SK-N-SH (cell line): ENCODE measurements at regions of chr14 and their contacts with region 1.

Region 1: GRCh38 chr14:76918751-76919543 is 92.7 kb downstream of the LRRC74A start:
- DNase-seq: peak; percentile 74
- H3K4me3 ChIP-seq: peak overlapping the region; percentile 15 to 47; a peak in 3 of 4 replicates
- H3K27ac ChIP-seq: peak overlapping the region; percentile 100
- H3K4me1 ChIP-seq: peaks cover 67 to 73% of the 10 kb centered on the region in 2 experiments
- H3K27me3 ChIP-seq: no peaks in the 10 kb centered on the region
- CTCF ChIP-seq: peak; percentile 22
- EP300 ChIP-seq: peak; percentile 62 to 90; a peak in 3 of 4 replicates
- RAD21 ChIP-seq: peak; percentile 41

Region 2: GRCh38 chr14:76687611-76688382 is 231.2 kb before region 1 on chr14:
- CTCF ChIA-PET with region 1: no interaction called
- POLR2A ChIA-PET with region 1: no interaction called
- DNase-seq: no peak
- H3K4me3 ChIP-seq: no peak overlapping the region
- H3K27ac ChIP-seq: no peak overlapping the region
- H3K4me1 ChIP-seq: no peaks in the 10 kb centered on the region
- H3K27me3 ChIP-seq: no peaks in the 10 kb centered on the region
- CTCF ChIP-seq: no peak
- EP300 ChIP-seq: no peak
- RAD21 ChIP-seq: no peak

Region 3: DNA sequence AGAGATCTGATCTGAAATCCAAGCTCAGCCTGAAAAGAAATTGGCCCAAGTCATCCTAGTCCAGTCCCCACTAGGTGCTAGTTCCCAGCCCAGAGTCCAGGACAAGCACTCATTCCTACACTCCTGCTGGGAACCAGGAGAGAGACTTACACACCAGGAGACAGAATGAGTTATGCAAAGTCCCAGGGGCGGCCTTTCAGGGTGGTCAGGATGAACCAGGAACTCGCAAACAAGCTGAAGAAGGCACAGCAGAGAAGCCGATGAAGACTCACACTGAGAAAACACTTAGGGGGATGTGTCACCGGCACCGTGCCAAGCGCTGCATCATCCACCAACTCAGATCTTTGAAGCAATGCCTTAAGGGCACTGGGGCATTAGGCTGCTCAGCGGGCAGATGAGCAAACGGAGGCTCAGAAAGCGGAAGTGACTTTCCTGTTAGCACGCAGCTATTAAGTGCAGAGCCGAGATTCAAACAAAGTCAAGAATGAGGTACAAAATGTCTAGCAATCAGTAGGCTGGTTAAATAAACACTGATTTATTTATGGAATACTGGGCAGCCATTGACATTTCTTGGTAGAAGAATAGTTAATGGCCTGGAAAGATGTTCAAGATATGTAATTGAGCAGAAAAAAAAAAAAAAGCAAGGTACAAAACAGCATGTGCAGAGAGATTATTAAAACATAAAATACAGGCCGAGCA is 14.1 kb before region 1 on chr14:
- CTCF ChIA-PET with region 1: interaction called, 23 read pairs
- POLR2A ChIA-PET with region 1: no interaction called
- DNase-seq: peak; percentile 78
- H3K4me3 ChIP-seq: peak overlapping the region in 1 of 2 experiments; percentile 34; a peak in 2 of 4 replicates
- H3K27ac ChIP-seq: peak overlapping the region; percentile 55 to 85
- H3K4me1 ChIP-seq: peaks cover 19 to 24% of the 10 kb centered on the region in 2 experiments; a peak in 2 of 4 replicates
- H3K27me3 ChIP-seq: no peaks in the 10 kb centered on the region
- CTCF ChIP-seq: no peak
- EP300 ChIP-seq: peak; percentile 31 to 46; a peak in 2 of 4 replicates
- RAD21 ChIP-seq: no peak

Region 4: DNA sequence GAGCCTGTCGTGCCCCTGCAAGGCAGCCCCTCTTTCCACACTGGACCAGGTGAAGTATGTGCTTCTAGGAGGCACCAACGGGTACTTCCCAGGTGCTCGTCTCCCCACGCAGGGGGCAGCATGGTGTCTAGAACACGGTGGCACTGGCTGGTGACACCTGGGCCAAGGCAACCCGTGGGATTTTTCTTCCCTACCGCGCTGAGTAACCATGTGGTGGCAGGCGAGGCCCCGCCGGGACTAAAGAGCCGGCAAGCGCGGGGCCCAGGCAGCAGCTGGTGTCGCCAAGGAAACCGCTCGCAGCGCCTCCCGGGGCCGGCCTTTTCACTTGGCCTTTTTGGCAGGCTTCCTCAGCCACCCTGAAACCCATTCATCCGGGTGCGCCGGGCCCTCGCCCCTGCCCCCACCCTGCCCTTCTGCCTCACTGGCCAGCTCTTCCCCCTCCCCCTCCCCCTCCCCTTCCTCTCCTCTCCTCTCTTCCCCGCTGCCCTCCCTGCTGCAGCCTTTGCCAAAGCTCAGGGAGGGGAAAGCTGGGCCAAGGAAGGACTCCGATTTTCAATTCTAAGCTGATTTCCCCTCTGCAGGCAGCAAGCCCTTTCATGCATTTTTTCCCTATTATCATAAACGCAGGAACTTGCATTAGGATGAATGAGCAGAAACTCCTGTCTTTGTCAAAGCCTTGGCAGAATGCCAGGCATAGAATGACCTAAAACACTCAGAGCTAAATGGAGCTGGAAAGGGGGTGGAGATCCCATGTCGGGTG is 28.3 kb after region 1 on chr14:
- CTCF ChIA-PET with region 1: interaction called, 133 read pairs
- POLR2A ChIA-PET with region 1: interaction called, 9 read pairs
- DNase-seq: peak; percentile 90
- H3K4me3 ChIP-seq: peak overlapping the region; percentile 18 to 50
- H3K27ac ChIP-seq: peak overlapping the region; percentile 99
- H3K4me1 ChIP-seq: peaks cover 43 to 46% of the 10 kb centered on the region in 2 experiments
- H3K27me3 ChIP-seq: no peaks in the 10 kb centered on the region
- CTCF ChIP-seq: peak; percentile 52
- EP300 ChIP-seq: peak; percentile 47 to 49; a peak in 2 of 4 replicates
- RAD21 ChIP-seq: peak; percentile 73

Region 5: DNA sequence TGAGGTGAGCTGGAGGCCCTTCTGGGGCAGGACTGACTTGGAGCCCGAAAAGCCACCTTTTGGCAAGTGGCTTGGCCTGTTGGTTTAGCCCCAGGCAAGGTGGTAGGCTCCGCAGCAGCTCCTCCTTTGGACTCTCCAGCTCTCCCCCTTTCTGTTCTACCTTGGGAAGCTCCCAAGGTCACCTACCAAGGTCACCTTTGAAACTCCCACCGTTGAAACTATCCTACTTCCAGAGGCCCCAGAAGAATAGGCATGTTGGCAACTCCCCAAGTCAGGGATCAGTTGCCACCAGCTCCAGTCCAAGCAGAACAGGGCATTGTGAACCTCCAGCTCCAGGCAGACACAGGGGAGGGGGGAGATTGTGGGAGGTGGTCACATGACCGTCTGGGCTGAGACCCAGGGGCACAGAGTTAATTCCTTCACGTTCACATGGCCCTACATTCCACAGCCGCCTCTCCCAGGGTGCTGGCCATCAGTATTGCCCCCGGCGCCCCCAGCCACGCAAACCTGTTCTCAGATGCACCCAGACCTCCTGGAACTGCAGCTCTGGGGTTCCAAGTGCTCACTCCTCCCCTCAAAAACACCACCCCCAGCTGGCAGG is 95.2 kb after region 1 on chr14:
- CTCF ChIA-PET with region 1: interaction called, 19 read pairs
- POLR2A ChIA-PET with region 1: no interaction called
- DNase-seq: peak; percentile 71
- H3K4me3 ChIP-seq: no peak overlapping the region
- H3K27ac ChIP-seq: 0 out of 4 replicates have a peak overlapping the region, but pooled peaks of 1 of the 2 experiments have one; percentile 7
- H3K4me1 ChIP-seq: peaks cover 0 to 13% of the 10 kb centered on the region in 2 experiments; a peak in 1 of 4 replicates
- H3K27me3 ChIP-seq: no peaks in the 10 kb centered on the region
- CTCF ChIP-seq: no peak
- EP300 ChIP-seq: no peak
- RAD21 ChIP-seq: no peak

Region 6: DNA sequence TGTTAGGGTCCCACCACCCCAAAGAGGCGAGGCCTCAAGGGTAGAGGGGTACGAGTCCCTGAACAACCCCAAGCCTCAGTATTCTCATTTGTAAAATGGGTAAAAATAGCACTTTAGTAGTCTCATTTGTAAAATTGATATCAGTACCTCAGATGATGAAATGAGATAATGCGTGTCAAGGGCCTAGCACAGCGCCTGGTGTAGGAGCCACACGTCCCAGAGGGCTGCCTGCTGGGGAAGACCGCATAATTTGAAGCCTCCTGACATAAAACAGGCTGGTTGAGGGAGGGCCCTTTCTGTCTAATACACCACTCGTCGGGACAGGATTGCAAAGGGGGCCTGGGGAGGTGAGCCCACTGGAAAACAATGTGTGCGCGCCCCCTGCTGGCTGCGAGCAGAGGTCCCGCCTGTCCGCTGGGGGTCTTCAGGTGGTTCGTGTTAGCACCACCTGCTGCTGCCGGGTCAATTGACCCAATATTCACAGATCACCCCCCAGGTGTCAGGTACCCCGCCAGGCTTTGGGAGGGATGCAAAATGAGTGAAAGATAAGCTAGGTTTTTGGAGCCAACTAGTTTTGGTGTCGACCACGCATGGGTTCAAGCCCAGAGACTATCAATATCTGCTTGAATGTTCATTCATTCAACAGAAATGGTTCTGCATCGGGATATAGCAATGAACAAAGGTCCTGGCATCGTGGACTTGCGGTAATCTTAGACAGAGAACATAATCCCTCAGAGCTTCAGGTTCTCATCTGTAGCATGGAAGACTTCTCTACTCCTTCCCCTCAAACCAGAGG is 134.3 kb after region 1 on chr14:
- CTCF ChIA-PET with region 1: interaction called, 484 read pairs
- POLR2A ChIA-PET with region 1: interaction called, 12 read pairs
- DNase-seq: peak; percentile 93
- H3K4me3 ChIP-seq: no peak overlapping the region; a peak in 1 of 4 replicates
- H3K27ac ChIP-seq: peak overlapping the region; percentile 10 to 70; a peak in 3 of 4 replicates
- H3K4me1 ChIP-seq: peaks cover 8 to 24% of the 10 kb centered on the region in 2 experiments; a peak in 2 of 4 replicates
- H3K27me3 ChIP-seq: no peaks in the 10 kb centered on the region
- CTCF ChIP-seq: peak; percentile 98
- EP300 ChIP-seq: no peak; a peak in 2 of 4 replicates
- RAD21 ChIP-seq: peak; percentile 96